CD8-positive, alpha-beta memory T cell (primary cell): ENCODE measurements at regions of chr12 and their contacts with region 1.

Region 1: DNA sequence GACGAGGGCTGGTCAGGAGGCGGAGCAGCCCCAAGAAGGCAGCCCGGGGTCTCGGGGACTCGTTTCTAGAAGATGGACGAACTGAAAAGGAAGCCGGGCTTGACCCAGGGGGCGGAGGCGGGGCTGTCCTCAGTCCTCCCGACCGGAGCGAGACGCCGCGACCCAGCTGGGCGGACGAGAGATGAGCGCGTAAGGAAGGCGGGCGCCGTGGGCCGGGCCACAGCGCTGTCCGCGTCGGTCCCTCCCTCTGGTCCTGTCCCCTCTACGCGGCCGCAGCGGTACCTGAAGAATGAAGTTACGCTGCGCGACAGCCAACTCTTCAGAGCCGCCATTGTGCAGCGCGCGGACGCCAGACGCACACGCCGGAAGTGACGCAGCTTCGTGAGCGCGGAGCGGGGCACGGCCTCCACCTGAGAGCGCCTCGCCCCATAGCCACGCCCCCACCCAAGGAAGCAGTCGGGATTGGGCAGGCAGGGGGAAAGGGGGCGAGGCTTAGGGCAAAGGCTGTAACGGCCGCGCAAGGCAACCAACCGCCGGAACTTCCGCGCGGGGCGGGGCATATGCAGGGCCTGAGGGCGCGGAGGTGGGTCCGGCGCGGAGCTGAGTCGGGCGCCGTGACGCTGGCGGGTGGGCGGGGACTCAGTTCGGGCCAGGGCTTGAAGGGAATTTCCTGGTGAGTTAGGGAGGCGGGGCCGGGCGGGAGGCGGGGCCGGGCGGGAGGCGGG is at the start of gene DIABLO:
- DNase-seq: peak; percentile 100
- H3K4me3 ChIP-seq: peak within 1 kb of the TSS; percentile 86
- H3K4me3 Mint-ChIP-seq: peak within 1 kb of the TSS; percentile 86 to 96 (median 89)
- H3K27ac ChIP-seq: peak within 1 kb of the TSS; percentile 99
- H3K27ac Mint-ChIP-seq: peak within 1 kb of the TSS; percentile 91 to 98 (median 94)
- H3K4me1 ChIP-seq: peaks cover 40% of the 10 kb centered on the region
- H3K4me1 Mint-ChIP-seq: peaks cover 46 to 67% (median 51%) of the 10 kb centered on the region in 3 donors
- H3K27me3 ChIP-seq: no peaks in the 10 kb centered on the region
- H3K27me3 Mint-ChIP-seq: no peaks in the 10 kb centered on the region
- total RNA-seq, gene DIABLO: 63.4 to 64.2 TPM

Region 2: GRCh38 chr12:122244565-122245371 is 18.9 kb after region 1 on chr12:
- CTCF ChIA-PET with region 1: interaction called, 43 read pairs
- POLR2A ChIA-PET with region 1: interaction called, 90 read pairs
- DNase-seq: peak in 2 of 5 donors; percentile 5 to 64
- H3K4me3 ChIP-seq: peak overlapping the region; percentile 56
- H3K4me3 Mint-ChIP-seq: peak overlapping the region; percentile 82 to 92 (median 88)
- H3K27ac ChIP-seq: peak overlapping the region; percentile 45
- H3K27ac Mint-ChIP-seq: peak overlapping the region; percentile 84 to 98 (median 94)
- H3K4me1 ChIP-seq: peaks cover 35% of the 10 kb centered on the region
- H3K4me1 Mint-ChIP-seq: peaks cover 33 to 52% (median 51%) of the 10 kb centered on the region in 3 donors
- H3K27me3 ChIP-seq: no peaks in the 10 kb centered on the region
- H3K27me3 Mint-ChIP-seq: no peaks in the 10 kb centered on the region